MCF 10A (cell line): ENCODE measurements at regions of chr6 and their contacts with region 1.

Region 1: DNA sequence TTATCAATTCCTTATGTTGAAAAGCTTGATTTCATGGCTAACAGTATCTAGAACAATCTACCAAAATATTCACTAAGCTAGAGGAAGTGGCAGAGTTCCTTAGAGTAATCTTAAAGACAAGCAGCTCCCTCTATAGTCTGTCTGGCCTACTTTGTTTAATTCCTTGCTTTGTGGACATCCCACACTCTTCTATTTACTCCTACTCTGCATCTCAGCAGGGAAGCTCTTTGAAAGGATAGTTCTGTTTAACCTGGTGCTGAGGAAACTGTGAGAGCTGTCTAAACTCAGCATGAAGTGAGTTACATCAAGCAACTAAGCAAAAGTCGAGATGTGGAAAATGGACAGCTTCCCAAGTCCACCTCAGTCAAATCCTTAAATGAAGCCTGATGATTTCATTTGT is 4.3 kb downstream of the REV3L start:
- DNase-seq: peak; percentile 73
- H3K4me3 Mint-ChIP-seq: peak overlapping the region; percentile 39
- H3K27ac Mint-ChIP-seq: peak overlapping the region; percentile 35
- H3K4me1 Mint-ChIP-seq: peaks cover 38% of the 10 kb centered on the region
- H3K27me3 Mint-ChIP-seq: no peaks in the 10 kb centered on the region
- CTCF ChIP-seq: peak; percentile 39

Region 2: DNA sequence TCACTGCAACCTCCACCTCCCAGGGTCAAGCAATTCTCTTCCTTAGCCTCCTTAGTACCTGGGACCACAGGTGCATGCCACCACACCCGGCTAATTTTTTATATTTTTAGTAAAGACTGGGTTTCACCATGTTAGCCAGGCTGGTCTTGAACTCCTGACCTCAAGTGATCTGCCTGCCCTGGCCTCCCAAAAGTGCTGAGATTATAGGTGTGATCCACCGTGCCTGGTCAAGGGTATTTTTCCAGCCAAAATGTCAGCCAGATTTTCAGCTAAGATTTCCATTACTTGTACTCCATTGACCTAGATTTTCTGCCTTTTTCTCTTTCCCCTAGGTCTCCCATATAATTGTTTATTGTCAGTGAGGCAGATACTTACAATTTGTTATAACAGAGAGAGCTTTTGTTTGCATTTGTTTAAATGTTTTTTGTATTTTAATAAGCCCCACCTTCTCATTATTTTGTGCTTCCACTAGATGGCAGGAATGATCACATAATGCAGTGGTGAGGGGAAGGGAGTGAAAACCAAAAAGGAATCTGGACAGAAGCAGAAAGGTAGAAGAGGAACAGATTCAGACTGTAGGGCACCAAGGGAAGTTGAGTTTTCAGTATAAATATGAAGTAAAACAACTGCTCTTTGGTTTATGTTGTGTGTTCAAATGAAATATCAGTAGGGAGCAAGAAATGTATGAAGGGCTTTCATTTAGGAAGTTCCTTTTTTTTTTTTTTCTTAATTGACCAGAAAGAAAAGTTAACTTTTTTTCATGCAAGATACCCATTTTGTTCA is 467.2 kb before region 1 on chr6:
- CTCF ChIA-PET with region 1: interaction called, 14 read pairs
- POLR2A ChIA-PET with region 1: no interaction called
- intact Hi-C with region 1: no loop called
- DNase-seq: peak; percentile 55
- H3K4me3 Mint-ChIP-seq: no peak overlapping the region
- H3K27ac Mint-ChIP-seq: no peak overlapping the region
- H3K4me1 Mint-ChIP-seq: no peaks in the 10 kb centered on the region
- H3K27me3 Mint-ChIP-seq: no peaks in the 10 kb centered on the region
- CTCF ChIP-seq: peak; percentile 45

Region 3: DNA sequence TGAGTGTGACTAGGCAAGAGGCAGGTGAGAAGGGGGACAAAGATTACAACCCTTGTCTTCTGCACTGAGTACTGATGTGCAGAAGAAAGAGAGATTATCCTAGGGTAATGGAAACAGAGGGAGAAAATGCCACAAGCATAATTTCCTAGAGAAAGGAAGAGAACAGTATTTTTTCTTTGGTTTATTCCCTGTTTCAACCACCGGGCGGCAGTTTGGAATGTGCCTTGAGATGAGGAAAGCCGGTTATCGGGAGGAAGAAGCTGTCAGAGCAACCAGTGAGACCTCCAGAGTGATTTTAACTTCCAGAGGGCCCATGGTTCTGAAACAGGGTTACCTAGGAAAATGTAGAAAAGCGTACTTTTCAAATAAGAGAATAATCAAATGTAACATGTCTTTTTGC is 117.1 kb before region 1 on chr6:
- CTCF ChIA-PET with region 1: interaction called, 13 read pairs
- POLR2A ChIA-PET with region 1: interaction called, 13 read pairs
- intact Hi-C with region 1: loop called (anchors 1 kb)
- DNase-seq: peak; percentile 56
- H3K4me3 Mint-ChIP-seq: no peak overlapping the region
- H3K27ac Mint-ChIP-seq: no peak overlapping the region
- H3K4me1 Mint-ChIP-seq: no peaks in the 10 kb centered on the region
- H3K27me3 Mint-ChIP-seq: no peaks in the 10 kb centered on the region
- CTCF ChIP-seq: peak; percentile 53

Region 4: GRCh38 chr6:111573892-111574797 is 95.4 kb after region 1 on chr6:
- CTCF ChIA-PET with region 1: no interaction called
- POLR2A ChIA-PET with region 1: interaction called, 29 read pairs
- intact Hi-C with region 1: loop called (anchors 5 kb)
- DNase-seq: peak; percentile 61
- H3K4me3 Mint-ChIP-seq: no peak overlapping the region
- H3K27ac Mint-ChIP-seq: peak overlapping the region; percentile 65
- H3K4me1 Mint-ChIP-seq: peaks cover 22% of the 10 kb centered on the region
- H3K27me3 Mint-ChIP-seq: no peaks in the 10 kb centered on the region
- CTCF ChIP-seq: no peak

Region 5: GRCh38 chr6:111605100-111605751 is 126.5 kb after region 1 on chr6:
- CTCF ChIA-PET with region 1: interaction called, 3 read pairs
- POLR2A ChIA-PET with region 1: interaction called, 145 read pairs
- intact Hi-C with region 1: loop called (anchors 1 kb)
- DNase-seq: peak; percentile 88
- H3K4me3 Mint-ChIP-seq: peak overlapping the region; percentile 90
- H3K27ac Mint-ChIP-seq: peak overlapping the region; percentile 72
- H3K4me1 Mint-ChIP-seq: peaks cover 40% of the 10 kb centered on the region
- H3K27me3 Mint-ChIP-seq: no peaks in the 10 kb centered on the region
- CTCF ChIP-seq: no peak